GM13977 (cell line): ENCODE measurements at regions of chr21 and their contacts with region 1.

Region 1: DNA sequence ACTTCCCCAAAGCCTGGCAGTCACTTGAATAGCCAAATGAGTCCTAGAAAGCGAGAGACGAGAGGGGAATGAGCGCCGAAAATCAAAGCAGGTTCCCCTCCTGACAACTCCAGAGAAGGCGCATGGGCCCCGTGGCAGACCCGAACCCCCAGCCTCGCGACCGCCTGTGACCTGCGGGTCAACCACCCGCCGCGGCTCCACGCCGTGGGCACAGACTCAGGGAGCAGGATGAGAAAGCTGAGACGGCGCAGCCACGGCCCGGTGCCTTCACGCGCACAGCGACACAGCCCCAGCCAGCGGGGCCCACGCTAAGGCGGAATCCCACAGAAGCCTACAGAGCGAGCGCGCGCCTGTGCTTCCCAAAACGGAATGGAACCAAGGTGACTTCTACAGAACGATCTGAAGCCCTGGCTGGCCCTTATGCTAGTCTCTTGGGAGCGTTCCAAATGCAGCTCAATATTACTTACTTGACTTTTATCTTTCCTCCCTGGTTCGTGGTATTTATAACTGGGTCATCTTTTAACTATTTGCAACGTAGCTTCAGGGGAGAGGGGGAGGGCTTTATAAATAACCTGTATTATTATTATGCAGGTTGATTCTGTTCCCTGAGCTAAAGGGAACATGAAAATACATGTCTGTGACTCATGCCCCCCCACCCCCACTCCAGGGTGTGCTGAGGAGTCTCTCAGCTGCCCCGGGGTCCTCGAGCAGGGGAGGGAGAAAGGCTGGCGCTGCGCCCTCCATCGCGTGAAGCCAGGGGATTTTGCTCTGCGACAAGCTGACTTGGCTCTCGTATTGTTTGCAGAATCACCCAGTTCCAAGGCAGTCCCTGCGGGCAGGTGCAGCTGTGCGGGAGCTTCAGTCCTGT is 1.7 kb downstream of the TSPEAR start:
- DNase-seq: no peak
- CTCF ChIP-seq: no peak

Region 2: GRCh38 chr21:44574444-44575306 is 135.0 kb before region 1 on chr21:
- in situ Hi-C with region 1: no loop called
- DNase-seq: no peak
- CTCF ChIP-seq: no peak

Region 3: GRCh38 chr21:44773287-44773966 is 63.8 kb after region 1 on chr21:
- in situ Hi-C with region 1: loop called (anchors 10 kb)
- DNase-seq: no peak
- CTCF ChIP-seq: no peak